ENCODE measurements at regions of chrX and their contacts with region 1.

Region 1: GRCh38 chrX:122445466-122445865 is 738.6 kb upstream of the GRIA3 start:
- DNase-seq: no peak
- H3K4me3 Mint-ChIP-seq: no peak overlapping the region
- H3K27ac Mint-ChIP-seq: peak overlapping the region; percentile 66
- H3K4me1 Mint-ChIP-seq: peaks cover 9% of the 10 kb centered on the region
- H3K27me3 Mint-ChIP-seq: no peaks in the 10 kb centered on the region
- CTCF ChIP-seq: no peak

Region 2: DNA sequence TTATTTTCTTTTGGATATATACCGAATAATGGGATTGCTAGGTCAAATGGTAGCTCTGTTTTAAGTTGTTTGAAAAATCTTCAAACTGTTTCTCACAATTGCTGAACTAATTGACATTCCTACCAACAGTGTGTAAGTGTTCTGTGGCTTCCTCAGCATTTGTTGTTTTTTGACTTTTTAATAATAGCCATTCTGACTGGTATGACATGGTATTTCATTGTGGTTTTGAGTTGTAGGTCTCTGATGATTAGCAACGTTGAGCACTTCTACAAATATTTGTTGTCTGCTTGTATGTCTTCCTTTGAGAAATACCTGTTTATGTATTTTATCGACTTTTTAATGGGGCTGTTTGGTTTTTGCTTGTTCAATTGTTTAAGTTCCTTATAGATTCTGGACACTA is 58.6 kb after region 1 on chrX:
- CTCF ChIA-PET with region 1: interaction called, 10 read pairs
- intact Hi-C with region 1: no loop called
- DNase-seq: no peak
- H3K4me3 Mint-ChIP-seq: no peak overlapping the region
- H3K27ac Mint-ChIP-seq: no peak overlapping the region
- H3K4me1 Mint-ChIP-seq: no peaks in the 10 kb centered on the region
- H3K27me3 Mint-ChIP-seq: no peaks in the 10 kb centered on the region
- CTCF ChIP-seq: no peak

Region 3: DNA sequence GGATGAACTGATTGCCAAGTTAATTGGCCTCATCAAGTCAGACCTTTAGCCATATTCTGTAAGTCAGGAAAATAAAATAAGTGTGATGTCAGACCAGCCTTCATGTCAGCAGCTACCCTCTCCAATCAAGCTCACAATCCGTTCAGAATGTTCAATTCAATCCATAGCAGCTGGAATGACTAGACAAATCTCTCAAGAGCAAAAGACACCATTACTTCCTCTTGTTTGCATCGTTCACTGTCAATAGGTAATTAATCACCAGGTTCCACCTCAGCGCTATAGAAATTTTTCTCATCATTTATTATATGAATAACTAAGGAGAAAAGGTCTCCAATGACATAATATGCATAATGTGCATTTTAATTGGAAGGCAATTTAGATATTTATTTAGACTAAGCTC is 417.6 kb after region 1 on chrX:
- CTCF ChIA-PET with region 1: no interaction called
- intact Hi-C with region 1: no loop called
- DNase-seq: no peak
- H3K4me3 Mint-ChIP-seq: no peak overlapping the region
- H3K27ac Mint-ChIP-seq: no peak overlapping the region
- H3K4me1 Mint-ChIP-seq: no peaks in the 10 kb centered on the region
- H3K27me3 Mint-ChIP-seq: no peaks in the 10 kb centered on the region
- CTCF ChIP-seq: no peak